PC-9 (cell line): ENCODE measurements at regions of chr2 and their contacts with region 1.

Region 1: GRCh38 chr2:98465456-98466226 is 21.0 kb downstream of the INPP4A start:
- DNase-seq: peak in 1 of 2 experiments; percentile 89
- H3K4me3 ChIP-seq: no peak overlapping the region
- H3K27ac ChIP-seq: no peak overlapping the region
- H3K4me1 ChIP-seq: peaks cover 11% of the 10 kb centered on the region
- H3K27me3 ChIP-seq: no peaks in the 10 kb centered on the region
- CTCF ChIP-seq: no peak

Region 2: GRCh38 chr2:98396745-98397355 is 68.8 kb before region 1 on chr2:
- CTCF ChIA-PET with region 1: interaction called, 12 read pairs
- POLR2A ChIA-PET with region 1: no interaction called
- intact Hi-C with region 1: no loop called
- DNase-seq: no peak
- H3K4me3 ChIP-seq: no peak overlapping the region
- H3K27ac ChIP-seq: no peak overlapping the region
- H3K4me1 ChIP-seq: no peaks in the 10 kb centered on the region
- H3K27me3 ChIP-seq: peaks cover 48% of the 10 kb centered on the region
- CTCF ChIP-seq: no peak